ENCODE measurements at regions of chr20 and their contacts with region 1.

Region 1: DNA sequence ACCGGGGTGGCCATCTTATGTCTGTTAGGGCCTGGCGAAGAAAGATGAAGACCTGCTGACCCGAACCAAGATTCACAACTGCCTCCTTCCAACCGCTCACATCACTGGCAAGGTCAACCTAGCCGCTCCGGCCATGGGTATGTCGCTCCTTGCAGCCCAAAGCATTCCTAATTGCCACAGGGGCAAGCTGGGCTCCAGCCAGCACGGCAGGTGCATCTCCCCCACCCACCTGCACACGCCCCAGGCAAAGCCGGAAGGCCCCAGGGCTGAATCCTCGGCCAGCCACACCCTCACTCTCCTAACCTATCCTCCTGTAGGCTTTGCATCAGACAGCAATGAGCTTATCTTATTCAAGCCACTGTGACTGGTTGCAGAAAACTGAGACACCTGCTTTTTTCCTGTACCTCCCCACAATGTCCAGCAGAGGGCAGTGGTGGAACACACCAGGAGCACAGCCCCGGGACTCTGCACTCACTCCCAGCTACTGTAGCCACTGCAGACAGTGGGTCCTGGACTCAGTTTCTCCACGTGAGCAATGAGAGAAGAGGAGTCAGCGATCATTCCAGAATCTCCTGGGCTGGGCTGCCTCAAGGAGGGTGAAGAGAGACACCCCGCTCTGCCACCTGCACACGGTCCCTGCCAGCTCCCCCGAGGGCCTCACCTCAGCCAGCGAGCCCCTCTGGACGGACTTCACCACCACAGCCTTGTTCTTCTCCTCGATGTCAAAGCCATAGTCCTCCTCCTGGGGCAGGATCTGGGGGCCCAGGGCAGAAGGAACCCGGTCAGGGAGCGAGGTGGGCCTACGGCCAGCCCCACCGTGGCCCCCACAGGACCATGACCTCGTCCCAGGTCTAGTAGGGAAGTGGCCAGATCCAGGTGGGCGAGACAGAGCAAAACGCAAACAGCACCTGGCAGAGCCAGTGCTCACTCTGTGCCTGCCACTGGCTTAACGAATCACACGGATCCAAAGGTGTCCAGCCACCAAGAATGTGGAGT is 170.0 kb downstream of the PREX1 start:
- DNase-seq: peak; percentile 55 to 63
- H3K4me3 ChIP-seq: no peak overlapping the region
- H3K27ac ChIP-seq: no peak overlapping the region
- H3K4me1 ChIP-seq: no peaks in the 10 kb centered on the region
- H3K27me3 ChIP-seq: no peaks in the 10 kb centered on the region
- CTCF ChIP-seq: peak; percentile 89 to 95 (median 92)
- POLR2A ChIP-seq: no peak

Region 2: DNA sequence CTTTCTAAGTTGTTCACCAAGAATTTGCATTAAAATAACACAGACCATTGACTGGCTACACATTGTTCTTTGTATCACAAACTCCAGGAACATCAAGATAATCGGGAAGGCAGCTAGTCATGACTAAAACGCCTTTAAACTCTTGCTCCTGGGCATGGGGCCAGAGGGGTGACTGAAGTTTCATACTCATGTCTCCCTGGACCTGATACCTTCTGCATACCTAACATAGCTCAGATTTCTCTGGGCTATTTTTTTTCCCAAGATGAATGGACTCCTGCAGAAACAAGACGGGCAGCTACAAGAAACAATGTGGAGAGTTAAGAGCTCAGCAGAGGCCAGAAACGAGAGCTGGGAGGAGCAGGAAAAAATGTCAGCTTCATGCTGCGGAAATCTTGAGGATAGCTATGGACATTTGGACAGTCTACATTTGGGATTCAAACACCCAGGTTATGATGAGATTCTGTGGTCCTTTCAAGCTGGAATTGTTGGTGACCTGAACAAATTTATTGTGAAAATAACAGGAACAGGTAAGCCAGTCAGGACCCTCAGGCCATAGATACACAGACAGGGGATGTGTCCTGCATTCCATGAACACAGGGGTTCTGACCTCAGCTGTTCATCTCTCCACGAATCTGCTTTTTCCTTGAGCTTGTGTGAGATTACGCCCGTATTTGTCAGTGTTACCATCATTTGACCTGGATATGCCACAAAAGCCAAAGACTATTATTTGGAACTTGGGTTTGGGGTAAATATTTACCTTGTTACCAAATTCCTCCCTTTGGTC is 119.2 kb before region 1 on chr20:
- intact Hi-C with region 1: no loop called
- DNase-seq: no peak
- H3K4me3 ChIP-seq: no peak overlapping the region
- H3K27ac ChIP-seq: no peak overlapping the region
- H3K4me1 ChIP-seq: no peaks in the 10 kb centered on the region
- H3K27me3 ChIP-seq: no peaks in the 10 kb centered on the region
- CTCF ChIP-seq: no peak
- POLR2A ChIP-seq: no peak

Region 3: DNA sequence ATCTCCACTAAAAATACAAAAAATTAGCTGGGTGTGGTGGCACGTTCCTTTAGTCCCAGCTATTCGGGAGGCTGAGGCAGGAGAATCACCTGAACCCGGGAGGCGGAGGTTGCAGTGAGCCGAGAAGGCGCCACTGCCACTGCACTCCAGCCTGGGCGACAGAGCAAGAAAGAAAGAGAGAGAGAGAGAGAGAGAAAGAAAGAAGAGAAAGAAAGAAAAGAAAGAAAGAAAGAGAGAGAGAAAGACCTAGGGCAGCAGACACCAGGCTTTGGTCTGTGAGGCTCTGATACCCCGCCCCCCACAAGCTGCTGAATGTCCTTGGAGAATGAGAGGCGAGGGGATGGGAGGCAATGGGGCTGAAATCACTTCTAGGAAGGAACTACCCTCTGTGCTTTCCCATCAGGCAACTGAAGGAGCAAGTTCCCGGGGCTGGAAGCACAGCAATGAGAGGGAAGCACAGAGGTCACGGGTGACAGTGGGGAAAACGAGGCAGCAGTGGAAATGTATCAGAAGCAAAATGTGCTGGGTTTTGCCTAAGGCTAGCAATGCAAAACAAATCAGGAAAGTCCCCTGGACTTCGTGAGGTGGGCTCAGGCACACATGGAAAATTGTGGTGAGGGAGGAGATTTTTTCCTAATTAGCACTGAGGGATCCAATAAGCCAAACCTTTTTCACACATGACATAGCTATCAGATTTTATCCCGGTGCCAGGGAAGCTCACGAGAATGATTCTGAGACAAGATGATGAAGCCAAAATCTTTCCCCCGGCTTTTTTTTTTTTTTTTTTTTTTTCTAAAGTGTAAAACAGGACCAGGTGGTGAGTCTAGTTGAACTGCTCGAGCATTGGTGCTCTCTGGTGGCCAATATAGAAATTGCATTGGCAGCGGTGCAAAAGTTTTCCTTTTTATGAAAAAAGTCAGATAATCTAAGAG is 246.9 kb after region 1 on chr20:
- intact Hi-C with region 1: loop called (anchors 5 kb)
- DNase-seq: peak; percentile 38 to 56
- H3K4me3 ChIP-seq: no peak overlapping the region
- H3K27ac ChIP-seq: no peak overlapping the region
- H3K4me1 ChIP-seq: no peaks in the 10 kb centered on the region
- H3K27me3 ChIP-seq: no peaks in the 10 kb centered on the region
- CTCF ChIP-seq: peak; percentile 80 to 86 (median 81)
- POLR2A ChIP-seq: no peak